ENCODE measurements at regions of chr15 and their contacts with region 1.

Region 1: DNA sequence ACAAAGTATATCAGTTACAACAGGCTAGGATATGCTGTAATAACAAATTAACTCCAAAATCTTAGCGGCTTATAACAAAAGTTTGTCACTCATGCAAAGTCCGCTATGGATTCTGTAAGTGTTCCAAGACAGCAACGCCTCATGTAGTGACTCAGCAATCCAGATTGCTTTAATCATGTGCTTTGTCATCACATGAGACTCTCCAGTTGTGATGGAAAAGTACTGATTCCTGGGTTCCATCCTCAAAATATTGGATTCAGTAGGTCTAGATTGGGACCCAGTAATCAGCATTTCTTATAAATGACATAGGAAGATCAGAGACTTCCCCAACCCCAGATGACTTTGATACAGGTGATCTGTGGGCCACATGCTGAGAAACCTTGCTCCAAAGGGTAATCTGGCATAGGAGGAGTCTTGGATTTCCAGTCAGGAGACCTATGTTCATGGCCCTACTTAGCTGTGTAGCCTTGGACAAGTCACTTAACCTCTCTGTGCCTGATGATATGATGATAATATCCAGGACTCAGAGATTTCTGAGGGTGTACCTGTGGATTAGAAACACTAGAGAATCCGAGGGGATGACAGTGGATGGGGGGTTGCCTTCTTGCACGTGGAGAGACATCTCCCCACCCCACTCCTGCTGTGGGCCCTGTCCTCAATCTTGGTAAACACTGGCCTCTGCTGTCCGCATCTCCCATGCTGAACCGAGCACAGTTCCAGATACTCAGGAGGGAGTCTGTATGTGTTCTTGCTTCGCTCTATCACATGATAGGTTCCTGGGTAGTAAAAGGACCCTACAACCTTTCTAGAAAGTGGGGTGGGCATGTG is 65.5 kb downstream of the CORO2B start:
- DNase-seq: no peak
- ATAC-seq: no peak
- H3K4me3 ChIP-seq: no peak overlapping the region
- H3K27ac ChIP-seq: no peak overlapping the region
- H3K4me1 ChIP-seq: no peaks in the 10 kb centered on the region
- H3K27me3 ChIP-seq: no peaks in the 10 kb centered on the region
- CTCF ChIP-seq: no peak

Region 2: DNA sequence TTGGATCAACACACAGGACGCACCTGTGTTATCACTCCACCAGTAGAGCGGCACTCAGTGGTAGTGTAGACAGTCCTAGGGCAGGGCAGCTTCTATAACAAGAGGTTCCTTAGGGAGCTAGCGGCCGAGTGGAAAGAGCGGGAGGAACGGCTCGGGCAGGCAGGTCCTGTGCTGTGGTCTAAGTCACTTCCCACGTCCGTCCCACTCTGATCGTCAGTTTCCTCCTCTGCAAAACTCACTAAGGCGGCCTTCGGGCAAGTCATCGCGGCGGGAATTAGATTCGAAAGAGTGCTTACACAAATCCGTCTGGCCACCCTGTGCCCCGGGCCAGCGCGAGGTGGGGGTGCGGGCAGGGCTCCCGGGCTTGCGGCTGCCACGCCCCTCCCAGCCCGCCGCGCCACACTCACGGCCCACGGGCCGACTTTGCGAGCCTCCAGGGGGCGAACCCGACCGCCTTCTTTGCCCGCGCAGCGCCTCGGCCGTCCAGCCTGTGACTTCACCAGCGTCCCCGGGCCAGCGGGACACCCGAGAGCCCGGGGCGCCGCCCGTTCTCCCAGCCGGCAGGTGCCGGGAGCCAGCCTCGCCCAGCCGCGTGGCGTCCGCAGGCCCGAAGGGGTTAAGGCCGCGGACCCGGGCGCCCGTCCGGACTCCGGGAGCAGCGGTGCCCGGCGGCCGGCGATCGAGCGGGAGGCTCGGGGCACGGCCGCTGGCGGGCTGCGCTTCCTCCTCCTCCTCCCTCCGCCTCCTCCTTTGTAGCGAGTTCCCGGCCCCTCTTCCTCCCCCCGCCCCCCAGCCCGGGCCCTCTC is 65.9 kb before region 1 on chr15:
- intact Hi-C with region 1: loop called in 1 of 2 experiments (anchors 5 kb)
- DNase-seq: peak; percentile 83 to 89
- ATAC-seq: peak; percentile 65 to 83 (median 78)
- H3K4me3 ChIP-seq: peak overlapping the region; percentile 71
- H3K27ac ChIP-seq: peak overlapping the region; percentile 16
- H3K4me1 ChIP-seq: peaks cover 11% of the 10 kb centered on the region
- H3K27me3 ChIP-seq: peaks cover 0 to 55% (median 5%) of the 10 kb centered on the region in 3 donors
- CTCF ChIP-seq: peak; percentile 42

Measured in psoas muscle (tissue), 8 donors.